Ascending aorta (tissue), 2 donors: ENCODE measurements at regions of chr1 and their contacts with region 1.

Region 1: GRCh38 chr1:206106328-206107167 is 10.6 kb downstream of the AVPR1B start:
- DNase-seq: peak in 1 of 2 donors; percentile 91
- H3K4me3 ChIP-seq: no peak overlapping the region
- H3K27ac ChIP-seq: peak overlapping the region; percentile 10 to 33
- H3K4me1 ChIP-seq: peaks cover 0 to 3% of the 10 kb centered on the region in 2 donors
- H3K27me3 ChIP-seq: no peaks in the 10 kb centered on the region
- CTCF ChIP-seq: peak; percentile 78 to 89 (median 83)

Region 2: GRCh38 chr1:205791568-205792180 is 314.9 kb before region 1 on chr1:
- intact Hi-C with region 1: loop called (anchors 2 kb)
- DNase-seq: no peak
- H3K4me3 ChIP-seq: no peak overlapping the region
- H3K27ac ChIP-seq: no peak overlapping the region
- H3K4me1 ChIP-seq: no peaks in the 10 kb centered on the region
- H3K27me3 ChIP-seq: no peaks in the 10 kb centered on the region
- CTCF ChIP-seq: peak; percentile 65 to 75 (median 74)

Region 3: GRCh38 chr1:205919026-205919746 is 187.4 kb before region 1 on chr1:
- intact Hi-C with region 1: loop called (anchors 1 kb)
- DNase-seq: peak; percentile 33 to 91
- H3K4me3 ChIP-seq: no peak overlapping the region
- H3K27ac ChIP-seq: peak overlapping the region; percentile 72 to 73
- H3K4me1 ChIP-seq: peaks cover 22 to 60% of the 10 kb centered on the region in 2 donors
- H3K27me3 ChIP-seq: no peaks in the 10 kb centered on the region
- CTCF ChIP-seq: peak; percentile 84 to 95 (median 90)

Region 4: DNA sequence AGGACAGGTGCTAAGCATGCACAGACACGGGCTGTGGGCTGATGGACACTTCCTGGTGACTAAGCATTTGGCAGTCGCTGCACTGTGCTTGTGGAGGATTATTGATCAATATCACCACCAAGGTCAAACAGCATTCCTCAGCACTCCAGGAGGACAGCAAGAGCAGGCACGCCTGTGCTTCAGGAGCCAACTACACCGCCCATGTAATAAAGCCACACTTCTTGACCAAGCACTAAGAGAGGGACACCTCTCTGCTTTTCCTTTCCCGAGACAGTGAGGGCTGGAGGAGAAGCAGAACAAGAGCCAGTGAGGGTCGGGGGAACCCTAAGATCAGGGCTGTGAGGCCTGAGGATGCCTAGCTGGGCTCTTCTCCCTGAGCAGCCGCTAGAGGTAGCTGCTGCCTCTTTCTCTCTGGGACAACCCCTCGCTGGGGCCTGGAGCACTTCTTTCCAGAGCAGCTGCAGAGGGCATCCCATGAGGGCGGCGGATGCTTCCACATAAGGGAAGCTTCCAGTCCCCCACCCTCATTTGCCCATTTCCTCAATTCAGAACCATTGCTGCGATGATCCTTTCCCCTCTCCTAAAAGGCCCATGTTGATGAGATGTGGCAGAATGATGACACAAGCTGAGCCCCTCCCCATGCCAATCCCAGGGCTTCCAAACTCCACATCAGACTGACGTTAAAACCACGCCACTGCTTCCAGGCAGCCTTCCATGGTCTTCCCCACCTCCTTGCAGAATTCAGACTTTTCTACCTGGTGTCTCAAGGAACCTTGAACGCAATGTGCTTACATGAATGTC is 122.4 kb before region 1 on chr1:
- intact Hi-C with region 1: loop called (anchors 2 kb)
- DNase-seq: no peak
- H3K4me3 ChIP-seq: no peak overlapping the region
- H3K27ac ChIP-seq: no peak overlapping the region
- H3K4me1 ChIP-seq: peaks cover 7 to 12% of the 10 kb centered on the region in 2 donors
- H3K27me3 ChIP-seq: no peaks in the 10 kb centered on the region
- CTCF ChIP-seq: peak; percentile 46 to 60 (median 51)

Region 5: GRCh38 chr1:206030714-206031113 is 75.8 kb before region 1 on chr1:
- intact Hi-C with region 1: loop called (anchors 5 kb)
- DNase-seq: peak in 1 of 2 donors; percentile 68
- H3K4me3 ChIP-seq: no peak overlapping the region
- H3K27ac ChIP-seq: no peak overlapping the region
- H3K4me1 ChIP-seq: no peaks in the 10 kb centered on the region
- H3K27me3 ChIP-seq: no peaks in the 10 kb centered on the region
- CTCF ChIP-seq: peak; percentile 32 to 66 (median 53)

Region 6: GRCh38 chr1:206050655-206051235 is 55.8 kb before region 1 on chr1:
- intact Hi-C with region 1: no loop called
- DNase-seq: peak in 1 of 2 donors; percentile 55
- H3K4me3 ChIP-seq: no peak overlapping the region
- H3K27ac ChIP-seq: no peak overlapping the region
- H3K4me1 ChIP-seq: no peaks in the 10 kb centered on the region
- H3K27me3 ChIP-seq: no peaks in the 10 kb centered on the region
- CTCF ChIP-seq: no peak